Caco-2 (cell line): ENCODE measurements at regions of chr5 and their contacts with region 1.

Region 1: DNA sequence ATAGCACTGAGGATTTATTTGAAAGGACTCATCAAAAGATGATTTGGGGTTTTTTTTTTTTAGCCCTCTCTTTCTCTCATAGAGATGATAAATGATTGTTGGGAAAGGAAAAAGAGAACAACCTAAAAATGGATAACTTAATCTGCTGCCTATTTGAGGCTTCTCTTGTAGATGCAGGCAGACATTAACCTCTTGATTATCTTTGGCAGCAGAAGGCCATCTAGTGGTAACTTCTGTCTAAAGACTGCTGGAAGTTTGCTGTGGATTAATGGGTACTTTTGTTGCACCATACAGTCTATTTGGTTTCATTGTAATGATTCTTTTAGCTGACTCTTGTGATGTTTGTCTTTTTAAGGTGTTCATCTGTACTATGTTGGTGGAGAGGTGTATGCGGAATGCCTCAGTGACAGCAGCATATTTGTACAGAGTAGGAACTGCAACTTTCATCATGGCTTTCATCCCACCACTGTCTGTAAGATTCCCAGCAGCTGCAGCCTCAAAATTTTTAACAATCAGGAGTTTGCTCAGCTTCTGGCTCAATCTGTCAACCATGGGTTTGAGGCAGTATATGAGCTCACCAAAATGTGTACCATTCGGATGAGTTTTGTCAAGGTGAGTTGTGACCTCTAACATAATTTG is 18.8 kb downstream of the SMIM32 start:
- DNase-seq: peak in 1 of 2 experiments; percentile 63
- H3K4me3 ChIP-seq: no peak overlapping the region
- H3K4me3 Mint-ChIP-seq: no peak overlapping the region
- H3K27ac Mint-ChIP-seq: no peak overlapping the region
- H3K4me1 ChIP-seq: no peaks in the 10 kb centered on the region; the same call in 1 of the 2 replicates
- H3K4me1 Mint-ChIP-seq: peaks cover 6% of the 10 kb centered on the region
- H3K27me3 ChIP-seq: no peaks in the 10 kb centered on the region
- H3K27me3 Mint-ChIP-seq: no peaks in the 10 kb centered on the region
- CTCF ChIP-seq: peak; percentile 68 to 84

Region 2: DNA sequence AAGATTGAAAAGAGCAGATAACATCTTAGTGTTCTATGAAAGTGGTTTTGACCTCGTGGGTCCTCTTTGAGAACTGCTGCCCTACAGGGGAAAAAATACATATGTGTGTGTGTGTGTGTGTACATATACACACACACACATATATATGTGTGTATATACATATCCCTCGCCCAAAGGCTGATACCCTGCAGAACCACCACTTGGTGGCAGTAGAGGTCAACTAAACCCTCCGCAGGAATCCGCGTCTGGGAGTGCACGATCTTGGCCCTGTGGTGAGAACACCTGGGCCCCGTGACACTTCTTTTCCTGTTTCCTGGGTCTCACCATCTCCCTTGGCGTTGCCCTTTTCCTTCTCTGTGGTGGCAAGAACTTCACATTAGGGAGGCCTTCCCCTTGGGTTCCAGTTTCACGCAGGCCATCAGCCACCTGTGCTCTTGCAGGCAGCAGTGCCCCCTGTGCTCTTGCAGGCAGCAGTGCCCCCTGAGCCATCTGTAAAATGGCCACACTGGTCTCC is 286.7 kb before region 1 on chr5:
- CTCF ChIA-PET with region 1: no interaction called
- POLR2A ChIA-PET with region 1: no interaction called
- intact Hi-C with region 1: loop called (anchors 1 kb)
- DNase-seq: peak; percentile 80 to 84
- H3K4me3 ChIP-seq: no peak overlapping the region
- H3K4me3 Mint-ChIP-seq: no peak overlapping the region
- H3K27ac Mint-ChIP-seq: no peak overlapping the region
- H3K4me1 ChIP-seq: peaks cover 11% of the 10 kb centered on the region; the same call in 1 of the 2 replicates
- H3K4me1 Mint-ChIP-seq: peaks cover 8% of the 10 kb centered on the region
- H3K27me3 ChIP-seq: no peaks in the 10 kb centered on the region
- H3K27me3 Mint-ChIP-seq: no peaks in the 10 kb centered on the region
- CTCF ChIP-seq: peak; percentile 86 to 87

Region 3: DNA sequence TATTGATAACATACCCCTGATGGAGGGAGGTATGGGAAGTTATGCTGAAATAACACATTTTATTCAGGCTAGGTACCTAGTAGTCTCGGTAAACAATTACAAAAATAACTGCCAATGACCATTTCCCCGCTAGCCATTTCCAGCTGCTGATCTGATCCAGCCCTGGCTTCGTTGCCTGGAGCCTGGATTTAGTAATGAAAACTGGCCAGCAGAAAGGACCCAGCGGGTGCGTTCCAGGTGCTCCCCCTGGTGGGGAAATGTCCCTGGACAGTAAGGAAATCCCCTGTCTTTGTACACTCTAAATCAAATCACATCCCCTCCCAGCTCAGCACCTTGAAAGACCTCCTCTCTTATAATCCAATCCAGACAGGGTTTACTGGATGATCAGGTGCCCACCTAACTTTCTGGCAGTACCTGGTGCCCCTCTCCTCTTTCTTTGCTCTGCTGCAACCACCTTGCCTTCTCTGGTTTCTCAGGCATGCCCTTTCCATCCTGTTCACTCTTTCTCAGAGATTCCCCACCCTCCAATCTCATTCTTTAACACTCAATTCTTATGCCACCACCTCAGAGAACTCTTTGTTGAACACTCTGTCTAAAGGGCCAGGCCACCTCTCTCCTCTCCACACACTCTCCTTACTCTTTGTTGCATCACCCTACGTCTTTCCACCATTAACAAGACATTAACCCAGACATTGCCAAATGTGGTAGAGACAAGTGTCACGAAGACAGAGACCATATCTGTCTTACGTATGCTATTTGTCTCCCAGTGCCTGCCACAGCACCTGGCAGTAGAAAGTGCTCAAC is 91.5 kb before region 1 on chr5:
- CTCF ChIA-PET with region 1: no interaction called
- POLR2A ChIA-PET with region 1: no interaction called
- intact Hi-C with region 1: loop called (anchors 1 kb)
- DNase-seq: peak; percentile 78 to 85
- H3K4me3 ChIP-seq: no peak overlapping the region
- H3K4me3 Mint-ChIP-seq: no peak overlapping the region
- H3K27ac Mint-ChIP-seq: no peak overlapping the region
- H3K4me1 ChIP-seq: peaks cover 11% of the 10 kb centered on the region
- H3K4me1 Mint-ChIP-seq: no peaks in the 10 kb centered on the region
- H3K27me3 ChIP-seq: no peaks in the 10 kb centered on the region
- H3K27me3 Mint-ChIP-seq: no peaks in the 10 kb centered on the region
- CTCF ChIP-seq: peak; percentile 88

Region 4: GRCh38 chr5:136103118-136103517 is 71.0 kb before region 1 on chr5:
- CTCF ChIA-PET with region 1: no interaction called
- POLR2A ChIA-PET with region 1: no interaction called
- intact Hi-C with region 1: loop called (anchors 1 kb)
- DNase-seq: no peak
- H3K4me3 ChIP-seq: no peak overlapping the region
- H3K4me3 Mint-ChIP-seq: no peak overlapping the region
- H3K27ac Mint-ChIP-seq: peak overlapping the region; percentile 87
- H3K4me1 ChIP-seq: peaks cover 96% of the 10 kb centered on the region
- H3K4me1 Mint-ChIP-seq: peaks cover 54% of the 10 kb centered on the region
- H3K27me3 ChIP-seq: no peaks in the 10 kb centered on the region
- H3K27me3 Mint-ChIP-seq: no peaks in the 10 kb centered on the region
- CTCF ChIP-seq: no peak

Region 5: DNA sequence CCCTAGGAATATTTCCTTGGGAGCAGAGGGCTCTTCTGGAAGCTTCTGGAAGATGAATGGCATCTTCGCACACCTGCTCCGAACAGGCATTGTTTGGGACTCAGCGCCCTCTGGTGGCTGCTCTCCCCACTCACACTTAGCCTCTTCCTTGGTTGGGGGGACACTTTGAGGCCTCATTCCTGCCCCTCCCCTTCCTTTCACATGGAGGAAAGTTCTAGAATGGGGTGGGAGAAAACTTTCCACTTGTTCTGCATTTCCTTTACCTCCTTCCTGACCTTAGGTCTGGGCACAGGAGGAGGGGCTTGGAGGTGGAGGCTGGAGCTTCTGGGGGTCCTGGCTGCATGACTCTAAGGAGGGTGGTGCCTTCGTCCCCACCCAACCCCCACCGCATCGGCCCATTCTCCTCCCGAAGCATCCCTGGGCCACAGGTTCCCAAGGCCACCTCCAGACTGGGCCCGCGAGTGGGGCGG is 38.1 kb after region 1 on chr5:
- CTCF ChIA-PET with region 1: no interaction called
- POLR2A ChIA-PET with region 1: no interaction called
- intact Hi-C with region 1: loop called (anchors 2 kb)
- DNase-seq: peak; percentile 68 to 70
- H3K4me3 ChIP-seq: no peak overlapping the region
- H3K4me3 Mint-ChIP-seq: no peak overlapping the region
- H3K27ac Mint-ChIP-seq: no peak overlapping the region
- H3K4me1 ChIP-seq: no peaks in the 10 kb centered on the region
- H3K4me1 Mint-ChIP-seq: no peaks in the 10 kb centered on the region
- H3K27me3 ChIP-seq: no peaks in the 10 kb centered on the region
- H3K27me3 Mint-ChIP-seq: no peaks in the 10 kb centered on the region
- CTCF ChIP-seq: peak; percentile 93 to 94